ENCODE measurements at regions of chr6 and their contacts with region 1.

Region 1: DNA sequence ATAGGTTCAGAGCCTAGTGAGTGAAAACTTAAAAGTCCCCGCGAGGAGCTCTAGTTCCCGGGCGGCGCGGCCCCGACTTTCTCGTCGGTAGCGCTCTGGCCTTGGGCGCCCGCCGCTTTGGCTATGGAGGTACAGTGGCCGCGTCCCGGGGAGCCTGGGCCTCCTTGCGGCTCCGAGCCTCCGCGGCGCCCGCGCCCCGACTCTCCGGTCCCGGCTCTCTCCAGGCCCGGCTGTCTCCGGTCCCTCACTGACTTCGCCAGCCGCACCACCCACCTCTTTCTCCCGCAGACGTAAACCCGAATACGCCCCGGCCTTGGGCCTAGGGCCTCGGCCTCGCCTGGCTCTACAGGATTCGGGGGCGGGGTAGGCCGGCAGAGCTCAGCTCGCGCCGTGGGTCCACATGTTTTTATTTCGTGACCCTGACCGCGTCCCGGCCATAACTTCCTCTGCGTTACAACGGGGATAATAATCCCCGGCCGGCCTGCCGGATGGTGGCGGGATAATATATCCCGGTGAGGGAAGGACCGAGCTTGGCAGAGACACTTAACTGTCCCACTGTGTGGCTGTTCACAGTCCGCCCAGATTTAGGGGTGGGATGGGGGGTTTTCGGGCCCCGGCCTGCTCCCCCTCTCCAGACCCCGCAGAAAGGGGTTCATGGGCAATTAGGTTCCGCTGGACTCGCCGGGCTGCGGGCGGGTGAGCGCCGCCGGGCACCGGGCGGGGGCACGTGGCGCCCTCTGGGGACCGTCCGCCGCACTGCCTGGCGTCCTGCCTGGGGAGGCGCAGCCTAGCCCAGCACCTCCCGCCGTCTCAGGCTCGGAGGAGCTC is 10.0 kb upstream of the TBX18 start:
- DNase-seq: peak; percentile 30
- H3K4me3 Mint-ChIP-seq: peak overlapping the region; percentile 20
- H3K27ac Mint-ChIP-seq: no peak overlapping the region
- H3K4me1 Mint-ChIP-seq: peaks cover 2% of the 10 kb centered on the region
- H3K27me3 Mint-ChIP-seq: peaks cover 51% of the 10 kb centered on the region

Region 2: GRCh38 chr6:83884523-83884922 is 889.8 kb before region 1 on chr6:
- CTCF ChIA-PET with region 1: interaction called, 3 read pairs
- POLR2A ChIA-PET with region 1: no interaction called
- intact Hi-C with region 1: loop called (anchors 10 kb)
- DNase-seq: no peak
- H3K4me3 Mint-ChIP-seq: no peak overlapping the region
- H3K27ac Mint-ChIP-seq: no peak overlapping the region
- H3K4me1 Mint-ChIP-seq: peaks cover 14% of the 10 kb centered on the region
- H3K27me3 Mint-ChIP-seq: no peaks in the 10 kb centered on the region

Region 3: GRCh38 chr6:84428300-84428907 is 346.0 kb before region 1 on chr6:
- CTCF ChIA-PET with region 1: no interaction called
- POLR2A ChIA-PET with region 1: no interaction called
- intact Hi-C with region 1: loop called (anchors 10 kb)
- DNase-seq: peak; percentile 34
- H3K4me3 Mint-ChIP-seq: no peak overlapping the region
- H3K27ac Mint-ChIP-seq: no peak overlapping the region
- H3K4me1 Mint-ChIP-seq: no peaks in the 10 kb centered on the region
- H3K27me3 Mint-ChIP-seq: no peaks in the 10 kb centered on the region

Region 4: DNA sequence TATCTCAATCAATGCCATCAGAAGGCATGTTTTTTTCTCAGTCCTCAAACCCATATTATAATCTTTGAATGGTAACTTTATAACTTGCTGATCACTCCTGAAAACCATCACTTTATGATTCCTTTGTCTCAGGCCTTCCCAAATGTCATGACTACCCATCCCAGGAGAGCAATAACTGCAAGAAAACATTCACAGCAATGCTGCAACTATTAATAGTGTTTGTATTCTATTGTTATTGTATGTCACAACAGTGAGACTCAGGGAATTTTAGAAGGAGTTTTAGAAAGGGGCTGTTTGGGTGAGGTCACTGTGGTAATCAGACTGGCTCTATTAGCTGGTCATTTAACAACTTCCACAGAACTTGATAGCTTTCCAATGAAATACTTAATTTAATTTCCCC is 291.5 kb after region 1 on chr6:
- CTCF ChIA-PET with region 1: no interaction called
- POLR2A ChIA-PET with region 1: no interaction called
- intact Hi-C with region 1: no loop called
- DNase-seq: no peak
- H3K4me3 Mint-ChIP-seq: no peak overlapping the region
- H3K27ac Mint-ChIP-seq: no peak overlapping the region
- H3K4me1 Mint-ChIP-seq: no peaks in the 10 kb centered on the region
- H3K27me3 Mint-ChIP-seq: no peaks in the 10 kb centered on the region

Measured in activated CD4-positive, alpha-beta memory T cell treated with anti-CD3 and anti-CD28 coated beads for 36 hours (primary cell).